Aorta (tissue), 5 donors: ENCODE measurements at regions of chr1 and their contacts with region 1.

Region 1: GRCh38 chr1:47424336-47424982 is 8.4 kb downstream of the FOXE3 start:
- DNase-seq: no peak
- ATAC-seq: peak; percentile 38
- H3K4me3 ChIP-seq: no peak overlapping the region
- H3K27ac ChIP-seq: no peak overlapping the region
- H3K4me1 ChIP-seq: no peaks in the 10 kb centered on the region
- H3K27me3 ChIP-seq: no peaks in the 10 kb centered on the region

Region 2: DNA sequence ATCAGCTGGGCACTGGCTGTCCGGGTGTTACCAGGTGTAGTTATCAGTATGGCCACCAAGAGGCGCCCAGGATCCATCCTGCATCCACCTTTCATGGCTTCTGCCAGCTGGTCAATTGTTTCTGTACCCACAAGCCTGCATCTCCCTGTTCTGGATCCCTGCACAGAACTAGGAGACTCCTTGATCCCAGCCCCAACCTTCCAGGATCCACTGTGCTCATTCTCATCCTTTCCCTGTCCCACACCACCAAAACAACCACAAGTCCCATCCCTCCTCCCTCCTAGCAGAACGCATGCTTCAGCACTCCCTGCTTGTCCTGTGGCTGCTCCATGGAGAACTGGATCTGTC is 35.6 kb before region 1 on chr1:
- intact Hi-C with region 1: loop called in 1 of 2 experiments (anchors 2 kb)
- DNase-seq: peak; percentile 61 to 83
- ATAC-seq: peak; percentile 87
- H3K4me3 ChIP-seq: no peak overlapping the region
- H3K27ac ChIP-seq: no peak overlapping the region
- H3K4me1 ChIP-seq: no peaks in the 10 kb centered on the region
- H3K27me3 ChIP-seq: no peaks in the 10 kb centered on the region

Region 3: DNA sequence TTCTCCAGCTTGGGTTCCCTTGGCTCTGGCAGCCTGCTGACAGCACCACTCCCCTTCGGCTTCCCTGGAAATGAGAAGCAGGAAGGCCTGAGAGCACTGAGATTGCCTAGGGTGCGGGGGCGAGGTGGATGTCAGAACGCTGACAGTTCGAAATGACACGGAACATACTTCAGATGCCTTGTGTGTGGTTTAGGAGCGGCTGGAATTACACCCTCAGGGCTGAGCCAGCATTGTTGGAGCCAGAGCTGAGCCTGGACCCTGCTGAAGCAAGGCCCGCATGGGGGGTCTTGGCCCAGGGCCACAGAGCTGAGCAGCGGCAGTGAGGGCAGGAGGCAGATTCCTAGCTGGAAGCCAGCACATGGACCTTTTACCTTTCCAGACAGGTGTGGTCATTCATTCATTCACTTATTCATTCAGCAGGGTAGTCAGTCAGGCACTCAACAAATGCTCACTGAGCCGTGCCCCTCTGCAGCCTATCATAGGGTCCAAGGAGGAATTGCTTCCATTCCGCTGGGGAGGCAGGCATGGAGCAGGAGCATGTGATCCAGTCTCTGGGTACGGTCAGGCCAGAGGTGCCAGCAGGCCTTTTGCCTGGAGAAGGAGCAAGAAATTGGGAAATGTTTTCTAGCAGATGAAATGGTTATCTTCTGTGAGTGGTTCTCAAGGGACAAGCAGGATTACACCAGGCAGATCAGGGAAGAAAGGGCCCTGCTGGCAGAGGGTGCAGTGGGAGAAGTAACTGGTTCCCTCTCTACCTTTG is 15.0 kb before region 1 on chr1:
- intact Hi-C with region 1: no loop called
- DNase-seq: no peak
- ATAC-seq: no peak
- H3K4me3 ChIP-seq: no peak overlapping the region
- H3K27ac ChIP-seq: no peak overlapping the region
- H3K4me1 ChIP-seq: no peaks in the 10 kb centered on the region
- H3K27me3 ChIP-seq: no peaks in the 10 kb centered on the region

Region 4: DNA sequence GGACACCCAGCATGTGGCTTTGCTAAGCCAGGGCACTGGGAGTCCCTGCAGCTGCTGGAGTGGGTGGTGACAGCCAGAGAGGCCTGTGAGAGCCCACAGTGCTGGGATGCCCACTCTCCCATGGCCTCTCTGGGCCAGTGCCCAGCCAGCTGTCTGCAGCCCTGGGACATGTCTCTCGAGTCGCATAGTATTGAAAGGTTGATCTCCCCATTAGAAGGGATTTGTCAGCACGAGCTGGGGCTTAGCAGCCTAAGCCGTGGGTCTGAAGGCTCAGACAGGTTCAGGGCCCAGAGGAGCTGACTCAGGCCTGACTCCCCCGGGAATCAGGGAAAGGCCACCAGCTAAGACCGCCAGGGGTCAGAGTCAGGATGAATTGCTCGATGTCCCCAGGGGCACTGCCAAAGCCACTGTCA is 66.9 kb after region 1 on chr1:
- intact Hi-C with region 1: no loop called
- DNase-seq: no peak
- ATAC-seq: no peak
- H3K4me3 ChIP-seq: no peak overlapping the region
- H3K27ac ChIP-seq: no peak overlapping the region
- H3K4me1 ChIP-seq: no peaks in the 10 kb centered on the region
- H3K27me3 ChIP-seq: no peaks in the 10 kb centered on the region